Dendritic cell treated with granulocyte-macrophage colony-stimulating factor and Interleukin-4, amounts not matched to agents 40 ng/mL and 50 ng/mL, for 4 days (primary cell): ENCODE measurements at regions of chr11 and their contacts with region 1.

Region 1: GRCh38 chr11:110376711-110377324 is 52.9 kb upstream of the FDX1 start:
- H3K4me3 Mint-ChIP-seq: peak overlapping the region; percentile 39
- H3K27ac Mint-ChIP-seq: peak overlapping the region; percentile 45
- H3K4me1 Mint-ChIP-seq: peaks cover 34% of the 10 kb centered on the region
- H3K27me3 Mint-ChIP-seq: no peaks in the 10 kb centered on the region

Region 2: DNA sequence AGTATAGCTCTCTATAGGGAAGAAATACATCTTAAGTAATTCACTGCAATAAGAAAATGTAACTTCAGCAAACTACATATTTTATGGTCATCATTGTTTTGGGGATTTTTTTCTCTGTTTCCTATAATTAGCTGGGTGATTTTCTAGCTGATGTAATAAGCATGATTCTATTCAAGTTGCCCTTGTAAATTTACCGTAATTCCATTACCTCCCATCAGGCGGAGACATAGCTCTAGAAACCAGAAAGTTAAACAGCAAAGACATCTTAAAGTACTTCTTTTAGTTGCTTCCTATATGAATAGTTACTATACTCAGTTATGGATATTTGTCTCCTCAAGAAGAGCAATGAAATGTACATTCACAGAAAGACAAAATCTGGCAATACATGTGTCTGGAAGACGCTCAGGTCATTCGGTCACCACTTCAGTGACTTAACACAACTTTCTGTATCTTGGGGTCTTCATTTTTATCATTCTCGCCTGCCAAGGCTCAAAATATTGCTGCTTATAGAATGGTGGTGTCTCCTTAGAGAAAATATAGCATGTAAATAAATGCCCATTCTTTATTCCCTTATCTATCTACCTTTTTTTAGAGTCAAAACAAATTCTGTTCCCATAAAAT is 523.6 kb before region 1 on chr11:
- intact Hi-C with region 1: loop called (anchors 10 kb)
- H3K4me3 Mint-ChIP-seq: no peak overlapping the region
- H3K27ac Mint-ChIP-seq: no peak overlapping the region
- H3K4me1 Mint-ChIP-seq: no peaks in the 10 kb centered on the region
- H3K27me3 Mint-ChIP-seq: no peaks in the 10 kb centered on the region

Region 3: GRCh38 chr11:110185121-110185591 is 191.7 kb before region 1 on chr11:
- intact Hi-C with region 1: no loop called
- H3K4me3 Mint-ChIP-seq: no peak overlapping the region
- H3K27ac Mint-ChIP-seq: no peak overlapping the region
- H3K4me1 Mint-ChIP-seq: peaks cover 6% of the 10 kb centered on the region
- H3K27me3 Mint-ChIP-seq: no peaks in the 10 kb centered on the region

Region 4: DNA sequence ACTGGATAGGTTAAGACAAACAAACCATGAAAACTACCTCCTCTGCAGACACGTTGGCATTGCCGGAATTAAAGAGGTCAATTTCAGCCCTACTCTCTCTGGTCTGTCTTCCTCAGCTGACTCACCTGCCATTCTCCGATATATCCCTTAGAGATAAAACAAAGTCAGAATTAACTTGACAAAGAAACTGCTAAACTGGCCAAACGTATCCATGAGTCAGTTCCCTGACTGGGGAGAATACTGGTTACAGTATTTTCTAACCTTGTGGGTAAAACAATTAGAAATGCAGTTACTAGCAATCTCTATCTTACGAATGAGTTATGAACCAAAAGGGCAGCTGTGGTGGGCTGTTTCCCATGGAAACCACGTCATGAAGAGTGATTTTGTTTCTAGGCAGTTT is 176.6 kb before region 1 on chr11:
- intact Hi-C with region 1: loop called (anchors 1 kb)
- H3K4me3 Mint-ChIP-seq: no peak overlapping the region
- H3K27ac Mint-ChIP-seq: no peak overlapping the region
- H3K4me1 Mint-ChIP-seq: no peaks in the 10 kb centered on the region
- H3K27me3 Mint-ChIP-seq: peaks cover 1% of the 10 kb centered on the region

Region 5: DNA sequence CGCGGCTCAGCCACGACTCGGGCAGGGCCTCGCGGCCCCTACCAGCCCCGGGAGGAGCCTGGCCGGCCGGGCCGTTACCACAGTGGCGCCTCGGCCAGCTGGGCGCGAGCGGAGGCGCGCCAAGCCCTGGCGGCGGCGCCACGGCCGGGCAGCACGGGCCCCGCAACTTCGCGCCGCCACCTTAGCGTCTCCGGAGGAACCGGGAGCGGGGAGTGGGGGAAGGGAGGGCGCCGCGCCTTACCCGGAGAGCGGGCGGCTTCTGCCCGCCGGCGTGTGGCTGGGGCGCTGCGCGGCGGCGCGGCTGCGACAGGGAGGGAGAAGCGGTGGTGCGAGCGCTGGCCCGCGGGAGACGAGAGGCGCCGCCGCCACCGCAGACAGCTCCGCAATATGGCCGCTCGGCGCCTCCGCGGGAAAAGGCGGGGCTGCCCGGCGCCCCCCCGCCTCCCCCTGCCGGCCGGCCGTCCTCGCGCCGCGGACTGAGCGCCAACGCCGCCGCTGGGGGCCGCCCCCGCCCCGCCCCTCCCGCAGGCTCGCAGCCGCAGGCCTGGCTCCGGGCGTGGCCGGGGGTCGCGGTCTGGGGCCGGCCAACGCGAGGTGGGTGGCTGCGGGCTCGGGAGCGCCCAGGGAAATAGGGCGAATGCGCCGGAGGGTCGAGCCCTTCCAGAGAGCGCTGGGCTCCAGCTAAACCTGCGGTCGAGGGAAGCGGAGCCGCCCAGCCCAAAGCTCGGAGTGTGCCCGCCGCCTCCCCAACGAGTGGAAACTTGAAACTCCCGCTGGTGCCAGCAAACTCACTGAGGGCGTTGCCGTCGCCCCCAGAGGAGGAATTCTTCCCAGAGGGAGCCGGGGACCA is 80.4 kb before region 1 on chr11 and contains the start of gene RDX:
- intact Hi-C with region 1: loop called (anchors 5 kb)
- H3K4me3 Mint-ChIP-seq: peak within 1 kb of the TSS; percentile 81
- H3K27ac Mint-ChIP-seq: peak within 1 kb of the TSS; percentile 82
- H3K4me1 Mint-ChIP-seq: peaks cover 28% of the 10 kb centered on the region
- H3K27me3 Mint-ChIP-seq: no peaks in the 10 kb centered on the region

Region 6: GRCh38 chr11:110429731-110430266 is 53.0 kb after region 1 on chr11 and contains the start of gene FDX1:
- intact Hi-C with region 1: loop called (anchors 2 kb)
- H3K4me3 Mint-ChIP-seq: peak within 1 kb of the TSS; percentile 94
- H3K27ac Mint-ChIP-seq: peak within 1 kb of the TSS; percentile 95
- H3K4me1 Mint-ChIP-seq: peaks cover 35% of the 10 kb centered on the region
- H3K27me3 Mint-ChIP-seq: no peaks in the 10 kb centered on the region